Activated B cell treated with CpG ODN at 0.5 μM for 24 hours (primary cell): ENCODE measurements at regions of chr12 and their contacts with region 1.

Region 1: GRCh38 chr12:546921-547845 is 87.4 kb downstream of the B4GALNT3 start:
- DNase-seq: peak; percentile 57
- ATAC-seq: peak; percentile 75
- H3K4me3 Mint-ChIP-seq: no peak overlapping the region
- H3K27ac Mint-ChIP-seq: no peak overlapping the region
- H3K4me1 Mint-ChIP-seq: peaks cover 7% of the 10 kb centered on the region
- H3K27me3 Mint-ChIP-seq: peaks cover 43% of the 10 kb centered on the region
- CTCF ChIP-seq: peak; percentile 91

Region 2: GRCh38 chr12:442235-442884 is 104.8 kb before region 1 on chr12:
- CTCF ChIA-PET with region 1: interaction called, 10 read pairs
- POLR2A ChIA-PET with region 1: no interaction called
- intact Hi-C with region 1: loop called (anchors 1 kb)
- DNase-seq: no peak
- ATAC-seq: no peak
- H3K4me3 Mint-ChIP-seq: no peak overlapping the region
- H3K27ac Mint-ChIP-seq: no peak overlapping the region
- H3K4me1 Mint-ChIP-seq: no peaks in the 10 kb centered on the region
- H3K27me3 Mint-ChIP-seq: peaks cover 2% of the 10 kb centered on the region
- CTCF ChIP-seq: no peak